WTC11 (cell line): ENCODE measurements at regions of chr14 and their contacts with region 1.

Region 1: GRCh38 chr14:104224506-104225277 is 86.3 kb downstream of the KIF26A start:
- DNase-seq: peak; percentile 77
- ATAC-seq: peak; percentile 42
- H3K4me3 Mint-ChIP-seq: no peak overlapping the region
- H3K27ac Mint-ChIP-seq: peak overlapping the region; percentile 94
- H3K4me1 Mint-ChIP-seq: peaks cover 25% of the 10 kb centered on the region
- H3K27me3 Mint-ChIP-seq: no peaks in the 10 kb centered on the region
- CTCF ChIP-seq: peak; percentile 49

Region 2: GRCh38 chr14:104267895-104268294 is 43.2 kb after region 1 on chr14:
- CTCF ChIA-PET with region 1: interaction called, 10 read pairs
- POLR2A ChIA-PET with region 1: no interaction called
- DNase-seq: peak; percentile 14
- ATAC-seq: peak; percentile 52
- H3K4me3 Mint-ChIP-seq: no peak overlapping the region
- H3K27ac Mint-ChIP-seq: no peak overlapping the region
- H3K4me1 Mint-ChIP-seq: peaks cover 21% of the 10 kb centered on the region
- H3K27me3 Mint-ChIP-seq: no peaks in the 10 kb centered on the region
- CTCF ChIP-seq: no peak